Endothelial cell of umbilical vein (primary cell): ENCODE measurements at regions of chr9 and their contacts with region 1.

Region 1: DNA sequence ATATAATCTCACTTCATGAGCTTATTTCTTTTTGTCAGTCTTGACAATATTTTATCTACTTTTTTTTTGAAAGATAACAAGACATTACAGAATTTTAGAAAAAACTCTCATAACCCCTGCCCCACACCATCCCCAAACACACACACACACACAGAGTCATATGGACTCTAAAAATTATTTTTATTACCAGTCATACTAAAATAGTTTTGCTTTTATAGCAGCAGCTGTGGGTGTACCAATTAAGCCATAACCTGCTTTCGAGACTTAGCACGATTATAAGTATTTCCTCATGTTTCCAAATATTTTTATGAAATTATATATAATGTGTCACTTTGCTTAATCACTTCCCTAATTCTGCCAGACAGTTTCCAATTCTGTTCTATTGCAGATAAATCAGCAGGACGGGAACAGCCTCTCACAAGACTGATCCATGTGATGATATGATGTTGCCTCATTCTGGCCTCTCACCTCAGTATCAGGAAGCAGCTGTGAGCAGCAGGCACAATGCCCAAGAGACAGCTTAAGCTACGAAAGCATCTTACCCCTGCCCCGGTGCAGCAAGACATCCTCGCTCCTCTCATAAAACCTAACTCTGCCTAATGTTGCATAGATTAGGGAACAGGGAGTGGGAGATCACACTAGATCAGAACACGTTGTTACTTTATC is 7.0 kb downstream of the PDCL start:
- DNase-seq: peak; percentile 98
- H3K4me3 ChIP-seq: no peak overlapping the region
- H3K27ac ChIP-seq: peak overlapping the region; percentile 97
- H3K4me1 ChIP-seq: peaks cover 66% of the 10 kb centered on the region
- H3K27me3 ChIP-seq: no peaks in the 10 kb centered on the region
- CTCF ChIP-seq: no peak
- POLR2A ChIP-seq: peak; percentile 73

Region 2: DNA sequence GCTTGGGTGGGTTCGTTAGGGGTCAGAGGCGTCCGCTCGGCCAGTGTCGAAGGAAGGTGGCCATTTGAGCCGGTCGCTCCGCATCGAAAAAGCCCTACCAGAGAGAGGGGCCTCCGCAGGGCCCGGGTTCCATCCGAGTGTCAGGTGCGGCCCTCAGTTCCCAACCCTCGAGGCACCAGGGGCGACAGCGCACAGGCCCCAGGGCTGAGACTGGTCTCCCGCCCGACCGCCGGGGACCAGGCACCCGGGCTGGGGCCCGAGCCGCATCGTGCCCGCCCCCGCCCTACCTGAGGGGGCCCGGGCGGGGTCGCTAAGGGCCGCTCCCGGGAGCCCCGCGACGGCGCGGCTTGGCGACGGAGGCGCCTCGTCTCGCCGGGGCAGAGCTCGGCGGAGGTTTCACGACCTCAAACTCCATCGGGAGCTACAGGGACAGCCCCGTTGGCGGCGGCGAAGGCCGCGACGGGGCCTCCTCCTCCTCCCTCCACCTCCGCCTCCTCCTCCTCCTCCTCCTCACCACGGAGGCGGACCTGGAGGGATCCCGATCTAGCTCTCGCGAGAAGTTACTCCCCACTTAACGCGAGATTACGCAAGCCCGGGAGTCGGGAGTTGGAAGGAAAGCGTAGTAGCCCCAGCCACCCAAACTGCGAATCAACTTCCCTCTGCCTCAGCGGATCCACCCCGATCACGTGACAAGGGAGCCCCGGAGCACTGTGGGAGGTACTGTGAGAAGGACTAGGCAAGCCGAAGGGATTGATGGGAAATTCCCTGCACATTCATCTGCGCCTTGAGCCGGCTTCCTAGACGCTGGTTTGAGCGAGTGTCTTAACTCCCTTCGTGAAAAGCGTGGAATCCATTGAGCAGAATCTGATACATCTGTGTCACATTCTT is 83.7 kb after region 1 on chr9 and contains the start of gene RC3H2:
- CTCF ChIA-PET with region 1: no interaction called
- POLR2A ChIA-PET with region 1: no interaction called
- dilution Hi-C with region 1: no loop called
- intact Hi-C with region 1: loop called (anchors 1 kb)
- DNase-seq: peak; percentile 100
- H3K4me3 ChIP-seq: peak within 1 kb of the TSS; percentile 53 to 92 (median 54)
- H3K27ac ChIP-seq: peak within 1 kb of the TSS; percentile 73
- H3K4me1 ChIP-seq: peaks cover 21% of the 10 kb centered on the region
- H3K27me3 ChIP-seq: no peaks in the 10 kb centered on the region
- CTCF ChIP-seq: no peak
- POLR2A ChIP-seq: peak; percentile 88
- total RNA-seq, gene RC3H2: 57.3 and 63.0 TPM in 2 replicates

Region 3: DNA sequence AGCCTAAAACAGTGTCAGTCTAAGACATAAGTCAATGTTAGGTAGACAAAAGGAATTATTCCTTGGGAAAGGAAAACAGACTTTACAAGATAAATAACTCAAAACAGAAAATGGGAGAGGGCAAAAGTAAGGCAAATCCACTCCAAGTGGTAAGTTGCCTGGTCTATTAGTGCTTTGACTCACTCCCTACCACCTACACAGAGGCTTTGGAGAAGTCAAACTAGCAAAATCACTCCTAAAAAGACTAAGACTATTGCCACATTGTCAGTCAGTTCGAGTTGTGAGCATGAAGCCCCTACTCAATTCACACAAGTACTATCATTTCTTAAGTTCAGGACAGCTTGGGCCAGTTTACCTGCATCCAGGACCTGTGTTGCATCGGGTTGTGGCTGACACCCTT is 96.9 kb after region 1 on chr9:
- CTCF ChIA-PET with region 1: no interaction called
- POLR2A ChIA-PET with region 1: no interaction called
- dilution Hi-C with region 1: no loop called
- intact Hi-C with region 1: no loop called
- DNase-seq: no peak
- H3K4me3 ChIP-seq: no peak overlapping the region
- H3K27ac ChIP-seq: no peak overlapping the region
- H3K4me1 ChIP-seq: peaks cover 4% of the 10 kb centered on the region
- H3K27me3 ChIP-seq: no peaks in the 10 kb centered on the region
- CTCF ChIP-seq: no peak
- POLR2A ChIP-seq: no peak